CD4-positive, alpha-beta memory T cell (primary cell): ENCODE measurements at regions of chr10 and their contacts with region 1.

Region 1: GRCh38 chr10:6530211-6530840 is 49.8 kb downstream of the PRKCQ start:
- DNase-seq: peak; percentile 80 to 89 (median 86)
- H3K4me3 ChIP-seq: peak overlapping the region; percentile 35 to 36
- H3K4me3 Mint-ChIP-seq: peak overlapping the region; percentile 87 to 98 (median 90)
- H3K27ac ChIP-seq: peak overlapping the region; percentile 70
- H3K27ac Mint-ChIP-seq: peak overlapping the region; percentile 90 to 100 (median 99)
- H3K4me1 ChIP-seq: peaks cover 86% of the 10 kb centered on the region
- H3K4me1 Mint-ChIP-seq: peaks cover 71 to 91% (median 82%) of the 10 kb centered on the region in 4 donors
- H3K27me3 ChIP-seq: no peaks in the 10 kb centered on the region
- H3K27me3 Mint-ChIP-seq: no peaks in the 10 kb centered on the region

Region 2: DNA sequence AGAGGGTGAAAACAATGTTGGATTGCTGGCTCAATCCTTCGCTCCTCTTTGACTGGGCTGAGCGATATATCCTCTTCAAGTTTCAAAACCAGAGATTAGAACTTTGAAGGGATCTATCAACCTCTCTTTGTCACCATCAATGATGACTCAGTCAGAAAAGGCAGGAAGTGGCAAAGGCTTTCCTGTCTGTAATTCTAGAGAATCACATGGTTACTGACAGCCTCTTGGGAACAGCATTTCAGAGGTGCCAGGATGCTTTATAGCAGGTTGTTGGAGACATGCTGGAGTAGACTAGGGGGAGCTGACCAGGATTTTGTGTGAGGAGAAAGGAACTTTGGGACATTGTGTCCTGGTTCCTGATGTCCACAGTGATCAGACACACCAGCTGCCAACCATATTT is 31.6 kb before region 1 on chr10:
- CTCF ChIA-PET with region 1: interaction called, 6 read pairs
- POLR2A ChIA-PET with region 1: interaction called, 14 read pairs
- intact Hi-C with region 1: loop called (anchors 1 kb)
- DNase-seq: peak; percentile 62 to 83 (median 74)
- H3K4me3 ChIP-seq: peak overlapping the region in 1 of 2 donors; percentile 4
- H3K4me3 Mint-ChIP-seq: peak overlapping the region in 7 of 8 donors; percentile 39 to 87 (median 75)
- H3K27ac ChIP-seq: peak overlapping the region; percentile 59
- H3K27ac Mint-ChIP-seq: peak overlapping the region in 6 of 7 donors; percentile 91 to 96 (median 95)
- H3K4me1 ChIP-seq: peaks cover 65% of the 10 kb centered on the region
- H3K4me1 Mint-ChIP-seq: peaks cover 40 to 49% (median 48%) of the 10 kb centered on the region in 4 donors
- H3K27me3 ChIP-seq: no peaks in the 10 kb centered on the region
- H3K27me3 Mint-ChIP-seq: no peaks in the 10 kb centered on the region

Region 3: GRCh38 chr10:6542999-6543430 is 12.7 kb after region 1 on chr10:
- CTCF ChIA-PET with region 1: interaction called, 28 read pairs
- POLR2A ChIA-PET with region 1: interaction called, 139 read pairs
- intact Hi-C with region 1: loop called (anchors 1 kb)
- DNase-seq: peak; percentile 70 to 81 (median 78)
- H3K4me3 ChIP-seq: peak overlapping the region in 1 of 2 donors; percentile 30
- H3K4me3 Mint-ChIP-seq: peak overlapping the region; percentile 88 to 98 (median 93)
- H3K27ac ChIP-seq: peak overlapping the region; percentile 66
- H3K27ac Mint-ChIP-seq: peak overlapping the region; percentile 96 to 100 (median 99)
- H3K4me1 ChIP-seq: peaks cover 83% of the 10 kb centered on the region
- H3K4me1 Mint-ChIP-seq: peaks cover 67 to 86% (median 77%) of the 10 kb centered on the region in 4 donors
- H3K27me3 ChIP-seq: no peaks in the 10 kb centered on the region
- H3K27me3 Mint-ChIP-seq: no peaks in the 10 kb centered on the region

Region 4: GRCh38 chr10:6563075-6563474 is 32.7 kb after region 1 on chr10:
- CTCF ChIA-PET with region 1: interaction called, 6 read pairs
- POLR2A ChIA-PET with region 1: interaction called, 66 read pairs
- intact Hi-C with region 1: loop called (anchors 2 kb)
- DNase-seq: peak in 2 of 5 donors; percentile 35 to 62
- H3K4me3 ChIP-seq: peak overlapping the region in 1 of 2 donors; percentile 21
- H3K4me3 Mint-ChIP-seq: peak overlapping the region; percentile 68 to 90 (median 79)
- H3K27ac ChIP-seq: peak overlapping the region; percentile 56
- H3K27ac Mint-ChIP-seq: peak overlapping the region; percentile 85 to 94 (median 90)
- H3K4me1 ChIP-seq: peaks cover 98% of the 10 kb centered on the region
- H3K4me1 Mint-ChIP-seq: peaks cover 79 to 94% (median 88%) of the 10 kb centered on the region in 4 donors
- H3K27me3 ChIP-seq: no peaks in the 10 kb centered on the region
- H3K27me3 Mint-ChIP-seq: no peaks in the 10 kb centered on the region

Region 5: DNA sequence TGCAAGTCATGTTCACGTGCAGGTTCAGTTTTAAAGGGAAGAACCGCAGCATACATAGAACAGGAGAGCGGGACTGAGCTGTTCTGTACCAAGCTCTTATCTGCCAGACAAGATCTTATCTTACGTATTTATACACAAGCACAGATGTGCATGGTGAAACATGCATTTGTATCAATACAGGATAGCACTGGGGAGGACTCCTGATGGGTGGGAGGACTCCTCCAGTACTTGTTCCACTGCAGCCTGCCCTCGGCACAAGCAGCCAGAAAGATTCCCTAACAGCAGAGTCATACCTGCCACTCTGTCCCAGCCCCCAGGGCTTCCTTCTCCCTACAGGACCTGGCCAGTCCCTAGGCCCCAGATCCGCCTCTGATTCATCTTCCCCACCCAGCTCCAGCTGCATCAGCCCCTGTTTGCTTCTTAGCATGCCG is 62.9 kb after region 1 on chr10:
- CTCF ChIA-PET with region 1: interaction called, 13 read pairs
- POLR2A ChIA-PET with region 1: interaction called, 21 read pairs
- intact Hi-C with region 1: no loop called
- DNase-seq: peak in 4 of 5 donors; percentile 24 to 68 (median 28)
- H3K4me3 ChIP-seq: no peak overlapping the region
- H3K4me3 Mint-ChIP-seq: peak overlapping the region; percentile 39 to 81 (median 74)
- H3K27ac ChIP-seq: peak overlapping the region; percentile 40
- H3K27ac Mint-ChIP-seq: peak overlapping the region; percentile 88 to 97 (median 94)
- H3K4me1 ChIP-seq: peaks cover 93% of the 10 kb centered on the region
- H3K4me1 Mint-ChIP-seq: peaks cover 63 to 97% (median 77%) of the 10 kb centered on the region in 4 donors
- H3K27me3 ChIP-seq: no peaks in the 10 kb centered on the region
- H3K27me3 Mint-ChIP-seq: no peaks in the 10 kb centered on the region